ENCODE measurements at regions of chr1 and their contacts with region 1.

Region 1: DNA sequence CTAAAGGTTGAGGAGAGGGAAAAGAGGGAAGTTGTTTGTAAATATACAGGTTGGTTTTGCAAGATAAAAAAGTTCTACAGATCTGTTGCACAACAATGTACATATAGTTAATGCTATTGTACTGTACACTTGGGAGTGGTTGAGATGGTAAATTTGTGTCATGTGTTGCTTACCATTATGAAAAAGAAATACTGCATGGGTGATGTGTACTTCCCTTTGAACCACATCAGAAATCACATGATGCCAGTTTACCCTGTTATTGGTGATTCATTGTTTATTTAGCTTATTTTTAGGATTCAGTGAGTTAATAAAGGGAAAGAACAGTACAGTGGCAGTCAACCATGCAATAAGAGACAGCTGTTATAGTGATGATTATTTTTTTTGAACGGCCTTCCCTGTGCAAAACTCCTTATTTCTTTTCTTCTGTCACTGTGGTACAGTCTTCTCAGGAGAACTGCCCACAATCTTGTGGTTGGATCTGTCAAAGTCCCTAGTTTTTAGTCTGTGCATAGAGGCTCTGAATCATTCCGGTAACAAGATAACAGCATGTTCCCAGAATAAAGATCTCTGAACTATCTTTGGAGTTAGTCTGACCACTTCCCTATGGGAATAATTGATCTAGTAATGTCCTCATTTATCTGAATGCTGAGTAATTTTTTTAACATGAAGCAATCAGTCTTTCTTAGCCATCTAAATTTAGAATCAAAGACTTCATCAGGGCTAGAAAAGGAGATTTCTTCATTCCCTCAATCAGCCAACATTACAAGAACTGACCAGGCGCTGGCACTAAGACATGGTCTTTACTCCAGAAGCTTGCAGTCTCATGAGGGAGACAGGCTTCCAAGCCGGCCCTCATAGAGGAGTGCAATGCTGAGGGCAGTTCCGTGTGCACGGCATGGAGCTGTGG is 84.2 kb downstream of the SH3GLB1 start:
- DNase-seq: peak; percentile 61
- ATAC-seq: peak; percentile 91

Region 2: DNA sequence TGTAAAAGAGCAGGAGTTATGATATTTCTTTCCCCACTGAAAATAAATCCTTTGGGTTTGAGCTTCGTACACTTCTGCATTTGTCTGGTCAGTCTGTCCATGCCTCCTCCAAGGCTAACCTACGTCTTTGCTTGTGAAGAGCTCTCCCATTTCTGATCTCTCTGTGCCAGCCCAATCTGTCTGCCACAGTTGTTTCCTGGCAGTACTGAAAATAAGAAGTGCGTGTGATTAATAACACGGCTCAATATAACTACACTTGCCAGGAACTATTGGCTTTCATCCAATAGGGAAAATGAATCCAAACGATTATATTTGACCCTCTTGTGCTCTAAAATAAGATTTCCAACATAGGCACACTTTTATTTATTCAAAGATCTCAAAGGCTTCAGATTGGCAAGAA is 612.8 kb before region 1 on chr1:
- intact Hi-C with region 1: no loop called
- DNase-seq: no peak
- ATAC-seq: no peak

Region 3: DNA sequence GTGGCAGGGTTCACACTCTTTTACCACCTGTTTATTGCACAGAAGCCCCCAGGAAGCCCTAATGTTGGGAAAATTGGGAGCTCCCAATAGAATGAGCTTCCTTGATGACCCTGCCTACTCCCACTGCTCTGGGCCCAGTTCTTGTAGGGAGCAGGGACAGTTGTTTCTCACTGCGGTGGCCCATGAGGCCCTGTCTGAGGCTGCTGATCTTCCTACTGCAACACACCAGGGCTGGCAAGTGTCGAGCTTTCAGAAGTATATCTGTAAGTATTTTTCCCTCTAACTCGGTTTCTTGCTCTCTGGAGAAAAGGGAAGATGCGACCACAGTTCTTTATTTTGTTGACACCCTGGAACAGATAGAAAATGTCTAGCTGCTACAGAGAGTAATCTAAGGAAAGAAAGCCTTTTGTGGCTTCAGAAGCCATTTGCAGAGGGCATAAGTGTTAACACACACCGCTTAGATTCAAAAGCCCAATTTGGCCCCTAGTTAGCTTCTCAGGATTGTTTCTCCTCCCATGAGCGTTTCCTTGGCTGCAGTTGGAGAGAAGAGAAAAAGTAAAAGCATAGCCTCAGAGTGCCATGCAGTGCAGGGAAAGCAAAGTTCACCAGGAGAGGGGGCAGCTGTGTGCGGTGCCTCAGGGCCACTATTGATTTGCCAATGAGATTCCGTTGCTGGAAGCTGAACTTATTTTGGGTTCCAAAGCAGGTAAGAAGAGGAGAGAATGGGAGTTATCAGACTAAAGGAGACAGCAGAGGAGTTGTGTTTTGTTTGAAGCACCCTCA is 22.8 kb after region 1 on chr1:
- intact Hi-C with region 1: no loop called
- DNase-seq: no peak
- ATAC-seq: no peak

Region 4: DNA sequence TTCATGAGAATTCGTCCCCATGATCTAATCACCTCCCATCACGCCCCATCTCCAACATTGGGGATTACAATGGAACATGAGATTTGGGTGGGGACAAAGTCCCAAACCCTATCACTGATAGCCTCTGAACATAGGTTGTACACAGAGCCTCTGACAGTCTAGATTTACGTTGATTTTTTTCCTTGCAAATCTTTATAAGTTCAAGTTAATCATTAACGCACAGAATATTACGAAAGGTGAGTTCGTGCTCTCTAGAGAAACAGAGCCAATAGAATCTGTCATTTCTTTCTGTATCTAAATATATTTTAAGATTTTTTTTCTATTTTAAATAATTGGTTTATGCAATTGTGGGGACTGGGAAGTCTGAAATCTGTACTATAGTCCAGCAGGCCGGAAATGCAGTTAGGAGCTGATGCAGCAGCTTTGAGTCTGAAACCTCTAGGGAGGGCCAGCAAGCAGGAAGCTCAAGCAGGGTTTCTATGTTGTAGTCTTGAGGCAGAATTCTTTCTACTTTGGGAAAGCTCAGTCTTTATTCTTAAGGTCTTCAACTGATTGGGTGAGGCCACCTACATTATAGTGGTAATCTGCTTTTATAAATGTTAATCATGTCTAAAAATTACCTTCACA is 64.3 kb after region 1 on chr1:
- intact Hi-C with region 1: loop called (anchors 2 kb)
- DNase-seq: no peak
- ATAC-seq: no peak

Region 5: DNA sequence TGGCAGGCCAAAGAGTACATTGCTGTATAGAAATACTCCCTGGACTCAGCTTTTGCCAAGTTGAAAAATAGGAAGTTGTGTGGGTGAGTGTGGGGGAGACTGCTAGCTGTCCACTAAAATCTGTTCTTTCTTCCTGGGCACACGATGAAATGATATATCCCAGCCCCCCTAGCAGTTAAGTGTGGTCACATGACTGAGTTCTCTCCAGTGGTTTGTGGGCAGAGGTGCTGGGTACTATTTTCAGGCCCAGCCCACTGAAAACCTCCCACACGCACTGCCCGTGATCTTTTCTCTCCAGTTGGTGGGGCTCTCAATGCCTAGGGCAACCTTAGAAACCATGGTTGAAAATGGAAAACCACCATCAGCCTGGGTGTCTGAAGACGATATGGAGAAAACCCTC is 420.4 kb after region 1 on chr1:
- intact Hi-C with region 1: no loop called
- DNase-seq: no peak
- ATAC-seq: no peak

Measured in sciatic nerve (tissue), 2 donors.